Naive thymus-derived CD4-positive, alpha-beta T cell (primary cell): ENCODE measurements at regions of chr11 and their contacts with region 1.

Region 1: DNA sequence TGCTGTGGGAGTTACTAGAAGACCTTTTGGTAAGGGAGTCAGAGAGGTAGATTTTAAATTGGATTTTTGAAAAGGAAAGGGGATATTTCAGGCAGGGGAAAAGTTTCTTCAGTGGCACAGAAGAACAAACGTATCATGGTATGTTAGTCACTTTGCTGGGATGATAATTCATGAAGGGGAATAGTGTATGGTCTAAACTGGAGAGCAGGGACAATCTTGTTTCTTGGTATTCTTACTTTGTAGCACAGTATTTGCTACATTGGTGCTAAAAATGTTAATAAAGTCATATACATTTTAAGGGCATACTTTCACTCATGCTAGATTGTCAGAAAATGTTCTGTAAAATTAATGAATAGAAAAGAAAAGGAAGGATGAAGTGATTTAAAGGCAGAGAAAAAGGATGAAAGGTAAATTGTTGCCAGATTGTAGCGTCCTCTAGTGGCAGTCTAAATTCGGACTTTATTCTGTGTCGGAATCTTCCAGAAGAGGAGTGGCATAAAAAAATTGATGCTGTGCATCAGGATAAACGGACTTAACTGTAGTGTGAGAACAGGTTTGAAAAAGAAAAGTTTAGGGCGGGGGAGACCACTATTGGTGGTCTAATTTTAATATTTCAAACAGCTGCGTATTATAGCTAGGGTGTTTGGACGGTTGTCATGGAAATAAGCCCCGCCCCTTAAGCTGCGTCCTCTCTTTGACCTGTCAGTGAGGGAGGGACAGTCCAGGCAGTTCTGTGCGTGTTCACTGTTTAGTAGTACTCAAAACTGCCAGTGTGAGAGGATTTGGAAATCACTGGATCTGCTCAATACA is at the start of gene BCO2:
- DNase-seq: peak in 4 of 9 donors; percentile 0 to 29 (median 15)
- ATAC-seq: peak; percentile 90
- H3K4me3 ChIP-seq: peak within 1 kb of the TSS; percentile 28
- H3K4me3 Mint-ChIP-seq: peak within 1 kb of the TSS; percentile 16 to 75 (median 53)
- H3K27ac ChIP-seq: no peak within 1 kb of the TSS
- H3K27ac Mint-ChIP-seq: no peak within 1 kb of the TSS
- H3K4me1 ChIP-seq: peaks cover 0 to 6% of the 10 kb centered on the region in 2 donors
- H3K4me1 Mint-ChIP-seq: peaks cover 10 to 17% (median 13%) of the 10 kb centered on the region in 7 donors
- H3K27me3 ChIP-seq: no peaks in the 10 kb centered on the region
- H3K27me3 Mint-ChIP-seq: peaks cover 13 to 47% (median 29%) of the 10 kb centered on the region in 5 donors
- total RNA-seq, gene BCO2: 1.5 to 3.8 (median 2.0) TPM

Region 2: GRCh38 chr11:111938687-111939160 is 236.3 kb before region 1 on chr11:
- CTCF ChIA-PET with region 1: no interaction called
- POLR2A ChIA-PET with region 1: no interaction called
- intact Hi-C with region 1: loop called in 1 of 2 experiments (anchors 5 kb)
- DNase-seq: peak in 6 of 9 donors; percentile 18 to 38 (median 27)
- ATAC-seq: peak; percentile 73
- H3K4me3 ChIP-seq: no peak overlapping the region
- H3K4me3 Mint-ChIP-seq: peak overlapping the region; percentile 59 to 95 (median 78)
- H3K27ac ChIP-seq: peak overlapping the region; percentile 49
- H3K27ac Mint-ChIP-seq: peak overlapping the region; percentile 67 to 96 (median 84)
- H3K4me1 ChIP-seq: peaks cover 4 to 29% of the 10 kb centered on the region in 2 donors
- H3K4me1 Mint-ChIP-seq: peaks cover 16 to 48% (median 32%) of the 10 kb centered on the region in 7 donors
- H3K27me3 ChIP-seq: no peaks in the 10 kb centered on the region
- H3K27me3 Mint-ChIP-seq: no peaks in the 10 kb centered on the region

Region 3: GRCh38 chr11:112113539-112114457 is 61.2 kb before region 1 on chr11:
- CTCF ChIA-PET with region 1: no interaction called
- POLR2A ChIA-PET with region 1: no interaction called
- intact Hi-C with region 1: loop called in 1 of 2 experiments (anchors 2 kb)
- DNase-seq: peak in 6 of 9 donors; percentile 17 to 46 (median 30)
- ATAC-seq: peak; percentile 76
- H3K4me3 ChIP-seq: no peak overlapping the region
- H3K4me3 Mint-ChIP-seq: peak overlapping the region in 1 of 10 donors; percentile 4
- H3K27ac ChIP-seq: no peak overlapping the region
- H3K27ac Mint-ChIP-seq: no peak overlapping the region
- H3K4me1 ChIP-seq: no peaks in the 10 kb centered on the region
- H3K4me1 Mint-ChIP-seq: peaks cover 0 to 21% (median 8%) of the 10 kb centered on the region in 7 donors
- H3K27me3 ChIP-seq: no peaks in the 10 kb centered on the region
- H3K27me3 Mint-ChIP-seq: no peaks in the 10 kb centered on the region